ENCODE measurements at regions of chr18 and their contacts with region 1.

Region 1: GRCh38 chr18:1133541-1133940 is 228.9 kb downstream of the ADCYAP1 start:
- DNase-seq: no peak
- ATAC-seq: no peak
- H3K4me3 ChIP-seq: no peak overlapping the region
- H3K4me3 Mint-ChIP-seq: no peak overlapping the region
- H3K27ac ChIP-seq: no peak overlapping the region
- H3K27ac Mint-ChIP-seq: no peak overlapping the region
- H3K4me1 ChIP-seq: no peaks in the 10 kb centered on the region
- H3K4me1 Mint-ChIP-seq: no peaks in the 10 kb centered on the region
- H3K27me3 ChIP-seq: no peaks in the 10 kb centered on the region
- H3K27me3 Mint-ChIP-seq: no peaks in the 10 kb centered on the region
- CTCF ChIP-seq: no peak

Region 2: GRCh38 chr18:1075322-1075721 is 58.2 kb before region 1 on chr18:
- intact Hi-C with region 1: loop called (anchors 10 kb)
- DNase-seq: no peak
- ATAC-seq: no peak
- H3K4me3 ChIP-seq: no peak overlapping the region
- H3K4me3 Mint-ChIP-seq: no peak overlapping the region
- H3K27ac ChIP-seq: no peak overlapping the region
- H3K27ac Mint-ChIP-seq: no peak overlapping the region
- H3K4me1 ChIP-seq: no peaks in the 10 kb centered on the region
- H3K4me1 Mint-ChIP-seq: no peaks in the 10 kb centered on the region
- H3K27me3 ChIP-seq: no peaks in the 10 kb centered on the region
- H3K27me3 Mint-ChIP-seq: no peaks in the 10 kb centered on the region
- CTCF ChIP-seq: no peak

Region 3: GRCh38 chr18:1191341-1191740 is 57.8 kb after region 1 on chr18:
- intact Hi-C with region 1: no loop called
- DNase-seq: no peak
- ATAC-seq: no peak
- H3K4me3 ChIP-seq: no peak overlapping the region
- H3K4me3 Mint-ChIP-seq: no peak overlapping the region
- H3K27ac ChIP-seq: no peak overlapping the region
- H3K27ac Mint-ChIP-seq: no peak overlapping the region
- H3K4me1 ChIP-seq: no peaks in the 10 kb centered on the region
- H3K4me1 Mint-ChIP-seq: no peaks in the 10 kb centered on the region
- H3K27me3 ChIP-seq: no peaks in the 10 kb centered on the region
- H3K27me3 Mint-ChIP-seq: no peaks in the 10 kb centered on the region
- CTCF ChIP-seq: no peak